ENCODE measurements at regions of chr9 and their contacts with region 1.

Region 1: DNA sequence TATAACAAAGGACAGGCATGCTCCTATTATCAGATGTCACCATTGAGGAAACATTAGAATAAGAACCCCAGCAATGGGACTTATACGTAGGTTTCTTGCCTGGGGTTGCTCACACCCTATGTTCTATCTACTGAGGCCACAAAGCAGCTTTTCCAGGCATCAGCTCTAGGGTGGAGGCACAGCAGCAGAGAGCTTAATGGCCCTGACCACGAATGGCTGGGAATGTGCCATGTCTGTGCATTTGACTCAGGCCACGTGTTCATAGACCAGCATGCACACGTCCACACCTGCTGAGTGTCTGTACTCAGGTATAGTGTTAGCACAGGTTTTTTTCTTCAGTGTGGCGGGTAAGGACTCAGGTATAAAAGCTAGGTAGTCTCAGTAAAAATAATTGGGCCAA is 129.4 kb downstream of the AOPEP start:
- DNase-seq: no peak
- ATAC-seq: no peak
- H3K4me3 ChIP-seq: no peak overlapping the region
- H3K4me3 Mint-ChIP-seq: no peak overlapping the region
- H3K27ac ChIP-seq: no peak overlapping the region
- H3K27ac Mint-ChIP-seq: no peak overlapping the region
- H3K4me1 ChIP-seq: peaks cover 3 to 12% of the 10 kb centered on the region in 2 experiments
- H3K4me1 Mint-ChIP-seq: peaks cover 15 to 19% (median 17%) of the 10 kb centered on the region in 3 donors
- H3K27me3 ChIP-seq: no peaks in the 10 kb centered on the region
- H3K27me3 Mint-ChIP-seq: no peaks in the 10 kb centered on the region

Region 2: GRCh38 chr9:94805585-94805984 is 50.3 kb before region 1 on chr9:
- CTCF ChIA-PET with region 1: no interaction called
- POLR2A ChIA-PET with region 1: no interaction called
- DNase-seq: no peak
- ATAC-seq: no peak
- H3K4me3 ChIP-seq: no peak overlapping the region
- H3K4me3 Mint-ChIP-seq: no peak overlapping the region
- H3K27ac ChIP-seq: no peak overlapping the region
- H3K27ac Mint-ChIP-seq: no peak overlapping the region
- H3K4me1 ChIP-seq: no peaks in the 10 kb centered on the region
- H3K4me1 Mint-ChIP-seq: peaks cover 6 to 10% (median 8%) of the 10 kb centered on the region in 3 donors
- H3K27me3 ChIP-seq: no peaks in the 10 kb centered on the region
- H3K27me3 Mint-ChIP-seq: no peaks in the 10 kb centered on the region

Region 3: GRCh38 chr9:95063300-95063699 is 207.4 kb after region 1 on chr9:
- CTCF ChIA-PET with region 1: interaction called in 1 of 2 experiments, 12 read pairs
- POLR2A ChIA-PET with region 1: no interaction called
- DNase-seq: no peak
- ATAC-seq: no peak
- H3K4me3 ChIP-seq: no peak overlapping the region
- H3K4me3 Mint-ChIP-seq: no peak overlapping the region
- H3K27ac ChIP-seq: no peak overlapping the region
- H3K27ac Mint-ChIP-seq: no peak overlapping the region
- H3K4me1 ChIP-seq: no peaks in the 10 kb centered on the region
- H3K4me1 Mint-ChIP-seq: no peaks in the 10 kb centered on the region
- H3K27me3 ChIP-seq: no peaks in the 10 kb centered on the region
- H3K27me3 Mint-ChIP-seq: no peaks in the 10 kb centered on the region

Measured in T-cell (primary cell).